OCI-LY7 (cell line): ENCODE measurements at regions of chr3 and their contacts with region 1.

Region 1: DNA sequence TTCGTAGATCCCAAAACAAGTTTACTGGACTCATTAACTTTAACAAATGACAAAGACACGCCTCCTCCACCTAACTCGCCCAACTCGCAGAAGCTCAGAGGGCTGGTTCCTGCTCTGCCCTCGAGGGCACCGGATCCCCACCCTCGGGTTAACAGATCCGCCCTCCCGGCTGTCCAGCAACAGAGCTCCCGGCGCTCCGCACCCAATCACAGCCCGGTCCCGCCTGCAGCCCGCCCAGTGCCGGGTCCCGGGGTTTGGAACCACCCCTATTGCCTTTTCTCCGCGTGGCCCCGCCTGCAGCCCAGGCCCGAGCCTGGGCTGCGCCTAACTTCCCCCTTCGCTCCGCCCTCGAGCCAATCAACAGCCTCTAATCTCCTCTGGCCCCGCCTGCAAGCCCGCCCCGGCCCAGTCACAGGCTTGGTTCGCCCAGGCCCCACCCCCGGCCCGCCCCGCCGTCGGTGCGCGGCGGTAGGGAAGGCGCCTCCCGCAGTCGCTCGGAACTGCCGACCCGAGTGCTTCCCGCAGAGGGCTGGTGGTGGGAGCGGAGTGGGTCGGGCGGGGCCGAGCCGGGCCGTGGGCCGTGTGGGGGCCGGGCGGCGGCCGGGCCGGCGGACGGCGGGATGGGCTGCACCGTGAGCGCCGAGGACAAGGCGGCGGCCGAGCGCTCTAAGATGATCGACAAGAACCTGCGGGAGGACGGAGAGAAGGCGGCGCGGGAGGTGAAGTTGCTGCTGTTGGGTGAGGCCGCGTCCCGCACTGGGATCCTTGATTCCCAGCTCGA is at the start of gene GNAI2:
- DNase-seq: peak; percentile 98
- H3K4me3 ChIP-seq: peak within 1 kb of the TSS; percentile 80
- H3K27ac ChIP-seq: peak within 1 kb of the TSS; percentile 64
- H3K4me1 ChIP-seq: peaks cover 41% of the 10 kb centered on the region
- CTCF ChIP-seq: no peak
- total RNA-seq, gene GNAI2: 165 and 190 TPM in 2 replicates

Region 2: DNA sequence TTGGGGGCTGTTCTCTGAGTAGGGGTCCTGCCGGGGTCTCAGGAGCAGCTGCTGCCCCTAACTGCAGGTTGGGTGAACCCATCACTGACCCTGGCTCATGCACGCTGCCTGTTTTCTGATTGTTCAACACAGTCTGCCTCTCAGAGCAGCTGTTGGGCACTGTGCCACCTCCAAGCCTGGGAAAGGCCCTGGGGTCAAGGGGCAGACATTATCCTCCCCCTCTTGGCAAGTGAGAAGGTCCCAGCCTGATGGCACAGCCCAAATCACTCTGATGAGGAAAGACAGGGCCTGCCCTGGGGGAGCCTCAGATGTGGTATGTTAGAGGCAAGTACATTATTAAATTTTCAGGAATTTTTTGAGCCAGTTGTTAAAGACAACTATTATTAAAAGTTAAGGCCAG is 58.6 kb before region 1 on chr3:
- CTCF ChIA-PET with region 1: no interaction called
- POLR2A ChIA-PET with region 1: no interaction called
- intact Hi-C with region 1: no loop called
- DNase-seq: no peak
- H3K4me3 ChIP-seq: no peak overlapping the region
- H3K27ac ChIP-seq: no peak overlapping the region
- H3K4me1 ChIP-seq: no peaks in the 10 kb centered on the region
- CTCF ChIP-seq: no peak

Region 3: DNA sequence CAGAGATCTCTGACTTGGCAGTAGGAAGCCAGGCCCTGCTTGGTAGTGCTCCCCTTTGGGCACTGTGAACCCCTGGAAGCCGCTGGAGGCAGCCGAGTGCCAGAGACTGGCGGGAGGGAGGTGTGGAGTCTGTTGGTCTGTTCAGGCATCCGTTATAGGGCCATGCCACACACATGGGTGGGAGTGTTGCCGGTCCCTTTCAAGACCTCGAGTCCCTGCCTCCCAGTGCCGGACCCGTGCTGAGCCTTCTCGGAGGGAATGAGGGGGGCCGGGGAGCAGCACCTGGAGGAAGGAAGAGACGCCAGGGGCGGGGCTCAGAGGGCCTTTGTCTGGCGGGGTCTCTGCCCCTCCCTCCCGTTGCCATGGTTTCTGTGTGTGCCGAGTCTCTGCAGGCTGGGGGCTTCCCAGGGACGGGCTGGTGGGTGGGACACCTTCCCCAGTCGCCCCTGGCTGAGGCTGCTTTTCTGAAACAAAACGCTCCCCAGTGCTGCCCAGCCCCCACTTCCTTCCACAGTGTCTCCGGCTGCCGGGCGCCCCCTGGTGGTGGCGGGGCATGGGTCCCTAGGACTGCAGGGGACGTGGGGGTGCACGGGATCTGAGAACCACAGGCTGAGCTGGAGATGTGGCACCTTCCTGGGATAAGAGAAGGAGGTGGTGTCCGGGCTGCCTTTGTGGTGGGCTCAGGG is 10.1 kb after region 1 on chr3:
- CTCF ChIA-PET with region 1: interaction called, 12 read pairs
- POLR2A ChIA-PET with region 1: interaction called, 24 read pairs
- intact Hi-C with region 1: loop called (anchors 1 kb)
- DNase-seq: peak; percentile 89
- H3K4me3 ChIP-seq: peak overlapping the region; percentile 64
- H3K27ac ChIP-seq: peak overlapping the region; percentile 79
- H3K4me1 ChIP-seq: peaks cover 67% of the 10 kb centered on the region
- CTCF ChIP-seq: peak; percentile 97

Region 4: DNA sequence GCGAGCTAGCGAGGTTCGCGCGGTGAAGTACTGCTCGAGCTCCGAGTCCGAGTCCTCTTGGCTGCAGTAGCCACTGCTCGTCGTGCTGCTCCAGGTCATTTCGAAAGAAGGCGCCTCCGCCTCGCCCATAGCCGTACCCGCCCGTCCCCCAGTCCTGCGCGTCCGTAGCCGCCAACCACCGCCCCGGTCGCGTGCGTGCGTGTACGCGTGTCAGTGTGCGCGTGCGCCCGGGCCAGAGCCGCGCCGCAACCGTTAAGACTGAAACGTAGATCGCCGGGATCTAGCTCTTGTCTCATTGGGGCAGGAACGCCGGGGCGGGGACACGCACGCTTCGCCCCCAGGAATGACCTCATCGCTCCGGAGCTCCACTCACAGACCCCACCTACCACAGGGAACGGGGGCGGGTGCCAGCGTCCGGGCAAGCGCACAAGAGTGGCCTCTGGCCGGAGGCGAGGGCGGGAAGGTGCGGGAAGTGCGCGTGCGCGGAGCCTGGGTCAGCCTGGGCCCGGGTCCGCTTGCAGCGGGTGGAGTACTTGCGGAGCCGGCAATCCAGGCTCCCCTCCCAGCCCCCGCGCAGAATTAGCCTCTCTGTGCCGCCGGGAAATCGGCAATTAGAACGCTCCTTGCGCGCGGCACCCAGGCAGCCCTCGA is 101.4 kb after region 1 on chr3:
- CTCF ChIA-PET with region 1: no interaction called
- POLR2A ChIA-PET with region 1: interaction called, 6 read pairs
- intact Hi-C with region 1: loop called (anchors 5 kb)
- DNase-seq: peak; percentile 98
- H3K4me3 ChIP-seq: peak overlapping the region; percentile 90
- H3K27ac ChIP-seq: peak overlapping the region; percentile 86
- H3K4me1 ChIP-seq: peaks cover 63% of the 10 kb centered on the region
- CTCF ChIP-seq: no peak

Region 5: GRCh38 chr3:50568947-50569749 is 333.2 kb after region 1 on chr3 and contains the start of gene HEMK1:
- CTCF ChIA-PET with region 1: no interaction called
- POLR2A ChIA-PET with region 1: no interaction called
- intact Hi-C with region 1: loop called (anchors 5 kb)
- DNase-seq: peak; percentile 97
- H3K4me3 ChIP-seq: peak within 1 kb of the TSS; percentile 95
- H3K27ac ChIP-seq: peak within 1 kb of the TSS; percentile 55
- H3K4me1 ChIP-seq: peaks cover 25% of the 10 kb centered on the region
- CTCF ChIP-seq: no peak
- total RNA-seq, gene HEMK1: 18.9 and 19.3 TPM in 2 replicates